ENCODE measurements at regions of chr7 and their contacts with region 1.

Region 1: DNA sequence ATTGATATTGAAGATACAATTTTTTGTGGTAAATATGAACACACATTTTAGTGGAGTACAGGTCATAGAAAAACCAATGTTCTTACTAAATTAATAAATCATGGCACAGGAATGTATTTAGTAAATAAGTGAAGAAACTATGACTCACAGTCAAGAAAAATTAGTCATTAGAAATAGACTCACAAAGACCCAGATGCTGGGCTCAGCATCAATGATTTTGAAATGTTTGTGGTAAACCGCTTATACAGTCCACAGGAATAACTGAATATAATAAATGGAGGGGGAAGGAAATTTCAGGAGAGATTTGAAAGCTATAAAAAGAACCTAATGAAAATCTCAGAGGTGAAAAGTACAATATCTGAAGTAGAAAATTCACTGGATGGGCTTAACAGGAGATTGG is 138.3 kb upstream of the ADCY1 start:
- DNase-seq: no peak
- ATAC-seq: no peak
- H3K4me3 ChIP-seq: no peak overlapping the region
- H3K4me3 Mint-ChIP-seq: no peak overlapping the region
- H3K27ac ChIP-seq: no peak overlapping the region
- H3K27ac Mint-ChIP-seq: no peak overlapping the region
- H3K4me1 ChIP-seq: no peaks in the 10 kb centered on the region
- H3K4me1 Mint-ChIP-seq: no peaks in the 10 kb centered on the region
- H3K27me3 ChIP-seq: no peaks in the 10 kb centered on the region
- H3K27me3 Mint-ChIP-seq: peaks cover 6 to 37% (median 22%) of the 10 kb centered on the region in 5 donors

Region 2: DNA sequence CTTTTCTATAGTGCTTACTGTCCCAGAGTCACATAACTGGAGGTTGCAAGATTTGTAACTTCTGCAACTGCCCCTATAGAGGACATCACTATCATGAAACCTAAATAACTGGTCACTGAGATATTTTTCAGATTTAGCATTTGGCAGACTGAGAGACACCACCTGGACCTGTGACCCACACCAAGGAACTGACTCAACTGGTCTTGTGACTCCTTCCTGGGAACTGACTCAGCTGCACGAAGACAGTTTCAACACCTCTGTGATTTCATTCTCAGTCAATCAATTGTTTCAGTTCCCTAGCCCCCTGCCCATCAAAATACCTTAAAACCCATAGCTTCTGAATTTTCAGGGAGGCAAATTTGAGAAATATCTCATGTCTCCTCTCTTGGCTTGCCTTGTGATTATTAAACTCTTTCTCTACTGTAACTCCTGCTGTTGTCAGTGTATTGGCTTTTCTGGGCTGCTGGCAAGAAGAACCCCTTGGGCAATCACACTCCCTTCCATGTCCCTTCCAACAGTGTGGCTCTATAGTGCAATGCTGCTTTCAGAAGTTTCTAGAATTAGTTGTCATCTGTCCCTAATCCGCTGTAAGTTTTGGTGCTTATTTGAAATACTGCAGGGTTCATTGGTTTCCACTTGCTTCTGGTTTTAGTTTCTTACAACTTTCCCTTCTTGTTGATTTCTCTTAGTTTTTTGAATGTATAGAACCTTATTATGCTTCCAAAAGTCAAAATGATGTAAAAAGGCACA is 10.5 kb after region 1 on chr7:
- CTCF ChIA-PET with region 1: no interaction called
- POLR2A ChIA-PET with region 1: no interaction called
- intact Hi-C with region 1: loop called in 1 of 2 experiments (anchors 1 kb)
- DNase-seq: no peak
- ATAC-seq: no peak
- H3K4me3 ChIP-seq: no peak overlapping the region
- H3K4me3 Mint-ChIP-seq: no peak overlapping the region
- H3K27ac ChIP-seq: no peak overlapping the region
- H3K27ac Mint-ChIP-seq: no peak overlapping the region
- H3K4me1 ChIP-seq: no peaks in the 10 kb centered on the region
- H3K4me1 Mint-ChIP-seq: no peaks in the 10 kb centered on the region
- H3K27me3 ChIP-seq: no peaks in the 10 kb centered on the region
- H3K27me3 Mint-ChIP-seq: peaks cover 0 to 25% (median 12%) of the 10 kb centered on the region in 5 donors

Region 3: GRCh38 chr7:45469103-45469502 is 33.3 kb after region 1 on chr7:
- CTCF ChIA-PET with region 1: no interaction called
- POLR2A ChIA-PET with region 1: no interaction called
- intact Hi-C with region 1: no loop called
- DNase-seq: no peak
- ATAC-seq: no peak
- H3K4me3 ChIP-seq: no peak overlapping the region
- H3K4me3 Mint-ChIP-seq: no peak overlapping the region
- H3K27ac ChIP-seq: no peak overlapping the region
- H3K27ac Mint-ChIP-seq: no peak overlapping the region
- H3K4me1 ChIP-seq: no peaks in the 10 kb centered on the region
- H3K4me1 Mint-ChIP-seq: peaks cover 0 to 2% (median 0%) of the 10 kb centered on the region in 7 donors
- H3K27me3 ChIP-seq: peaks cover 0 to 4% of the 10 kb centered on the region in 2 donors
- H3K27me3 Mint-ChIP-seq: peaks cover 10 to 44% (median 26%) of the 10 kb centered on the region in 5 donors

Measured in naive thymus-derived CD4-positive, alpha-beta T cell (primary cell).